ENCODE measurements at regions of chr5 and their contacts with region 1.

Region 1: GRCh38 chr5:159106569-159107282 is 7.0 kb upstream of the EBF1 start:
- DNase-seq: no peak
- H3K4me3 ChIP-seq: peak overlapping the region; percentile 15
- H3K27ac ChIP-seq: no peak overlapping the region
- H3K27me3 ChIP-seq: peaks cover 57% of the 10 kb centered on the region
- CTCF ChIP-seq: peak; percentile 94

Region 2: GRCh38 chr5:158174918-158175851 is 931.5 kb before region 1 on chr5:
- CTCF ChIA-PET with region 1: interaction called, 37 read pairs
- POLR2A ChIA-PET with region 1: no interaction called
- DNase-seq: peak; percentile 11
- H3K4me3 ChIP-seq: no peak overlapping the region
- H3K27ac ChIP-seq: no peak overlapping the region
- H3K27me3 ChIP-seq: peaks cover 2% of the 10 kb centered on the region
- CTCF ChIP-seq: peak; percentile 90

Region 3: DNA sequence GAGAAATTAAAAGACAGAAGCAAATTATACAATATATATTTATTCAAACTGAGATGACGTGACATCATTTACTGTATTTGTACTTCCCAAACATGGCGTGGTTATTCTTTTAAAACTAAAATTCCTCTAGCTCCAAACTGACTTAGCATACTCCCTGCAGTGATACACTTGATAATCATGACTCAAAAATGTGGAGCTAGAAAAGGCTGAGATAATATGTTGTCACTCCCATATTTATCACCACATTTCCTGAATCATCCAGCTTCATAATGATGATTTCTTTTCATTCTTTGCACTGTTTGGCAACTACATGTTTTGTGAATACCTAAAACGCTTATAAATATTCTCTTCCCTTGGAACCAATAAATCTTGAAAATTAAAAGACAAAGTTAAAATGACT is 348.1 kb before region 1 on chr5:
- CTCF ChIA-PET with region 1: interaction called, 10 read pairs
- POLR2A ChIA-PET with region 1: no interaction called
- DNase-seq: no peak
- H3K4me3 ChIP-seq: no peak overlapping the region
- H3K27ac ChIP-seq: no peak overlapping the region
- H3K27me3 ChIP-seq: no peaks in the 10 kb centered on the region
- CTCF ChIP-seq: no peak

Region 4: GRCh38 chr5:159082491-159082890 is 24.2 kb before region 1 on chr5:
- CTCF ChIA-PET with region 1: no interaction called
- POLR2A ChIA-PET with region 1: no interaction called
- DNase-seq: no peak
- H3K4me3 ChIP-seq: no peak overlapping the region
- H3K27ac ChIP-seq: no peak overlapping the region
- H3K27me3 ChIP-seq: peaks cover 3% of the 10 kb centered on the region
- CTCF ChIP-seq: no peak

Region 5: DNA sequence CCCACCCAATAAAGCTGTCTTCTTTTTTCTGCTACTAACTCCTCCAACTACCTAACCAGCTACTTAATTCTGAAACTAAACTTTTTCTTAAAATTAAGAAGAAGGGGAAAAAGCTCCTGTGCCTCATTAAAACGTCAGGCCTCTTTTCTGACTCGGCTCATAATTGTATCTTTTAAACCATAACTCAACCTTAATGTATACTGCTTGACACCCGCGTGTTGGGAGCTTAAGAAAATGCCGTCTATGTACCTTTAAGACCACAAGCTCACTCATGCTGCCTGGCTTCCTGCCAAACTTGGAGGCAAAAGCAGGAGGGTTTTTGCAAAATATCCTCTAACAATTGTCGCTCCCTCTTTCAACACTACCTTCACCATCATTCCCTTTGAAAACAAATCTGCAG is 12.0 kb before region 1 on chr5:
- CTCF ChIA-PET with region 1: interaction called, 10 read pairs
- POLR2A ChIA-PET with region 1: no interaction called
- DNase-seq: no peak
- H3K4me3 ChIP-seq: no peak overlapping the region
- H3K27ac ChIP-seq: no peak overlapping the region
- H3K27me3 ChIP-seq: peaks cover 29% of the 10 kb centered on the region
- CTCF ChIP-seq: no peak

Region 6: DNA sequence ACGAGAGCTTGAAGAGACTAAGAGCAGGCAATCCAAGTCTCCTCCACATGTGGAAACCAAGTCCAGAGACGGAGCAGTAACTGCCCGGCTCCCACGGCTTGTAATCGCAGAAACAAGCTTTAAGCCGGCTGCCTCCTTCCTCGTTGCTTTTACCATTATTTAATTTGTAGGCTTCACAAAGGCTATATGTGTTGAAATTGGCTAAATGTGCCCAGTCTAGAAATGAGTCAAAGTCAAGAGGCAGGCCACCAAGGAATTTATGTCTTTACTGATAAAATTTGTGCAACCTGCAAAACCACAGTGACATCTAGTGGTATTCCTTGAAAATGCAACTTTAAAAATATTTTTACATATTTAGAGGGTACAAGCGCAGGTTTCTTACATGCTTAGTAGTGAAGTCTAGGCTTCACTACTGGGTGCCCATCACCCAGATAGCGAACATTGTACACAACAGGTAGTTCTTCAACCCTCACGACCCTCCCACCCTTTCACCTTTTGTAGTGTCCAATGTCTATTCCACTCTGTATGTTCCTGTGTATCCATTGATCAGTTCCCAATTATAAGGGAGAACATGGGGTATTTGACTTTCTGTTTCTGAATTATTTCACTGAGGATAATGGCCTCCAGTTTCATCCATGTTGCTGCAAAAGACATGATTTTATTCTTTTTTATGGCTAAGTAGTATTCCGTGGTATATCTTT is 26.5 kb after region 1 on chr5:
- CTCF ChIA-PET with region 1: interaction called, 39 read pairs
- POLR2A ChIA-PET with region 1: no interaction called
- DNase-seq: peak; percentile 15
- H3K4me3 ChIP-seq: no peak overlapping the region
- H3K27ac ChIP-seq: no peak overlapping the region
- H3K27me3 ChIP-seq: peaks cover 11% of the 10 kb centered on the region
- CTCF ChIP-seq: peak; percentile 80